CD4-positive, alpha-beta T cell (primary cell): ENCODE measurements at regions of chr9 and their contacts with region 1.

Region 1: DNA sequence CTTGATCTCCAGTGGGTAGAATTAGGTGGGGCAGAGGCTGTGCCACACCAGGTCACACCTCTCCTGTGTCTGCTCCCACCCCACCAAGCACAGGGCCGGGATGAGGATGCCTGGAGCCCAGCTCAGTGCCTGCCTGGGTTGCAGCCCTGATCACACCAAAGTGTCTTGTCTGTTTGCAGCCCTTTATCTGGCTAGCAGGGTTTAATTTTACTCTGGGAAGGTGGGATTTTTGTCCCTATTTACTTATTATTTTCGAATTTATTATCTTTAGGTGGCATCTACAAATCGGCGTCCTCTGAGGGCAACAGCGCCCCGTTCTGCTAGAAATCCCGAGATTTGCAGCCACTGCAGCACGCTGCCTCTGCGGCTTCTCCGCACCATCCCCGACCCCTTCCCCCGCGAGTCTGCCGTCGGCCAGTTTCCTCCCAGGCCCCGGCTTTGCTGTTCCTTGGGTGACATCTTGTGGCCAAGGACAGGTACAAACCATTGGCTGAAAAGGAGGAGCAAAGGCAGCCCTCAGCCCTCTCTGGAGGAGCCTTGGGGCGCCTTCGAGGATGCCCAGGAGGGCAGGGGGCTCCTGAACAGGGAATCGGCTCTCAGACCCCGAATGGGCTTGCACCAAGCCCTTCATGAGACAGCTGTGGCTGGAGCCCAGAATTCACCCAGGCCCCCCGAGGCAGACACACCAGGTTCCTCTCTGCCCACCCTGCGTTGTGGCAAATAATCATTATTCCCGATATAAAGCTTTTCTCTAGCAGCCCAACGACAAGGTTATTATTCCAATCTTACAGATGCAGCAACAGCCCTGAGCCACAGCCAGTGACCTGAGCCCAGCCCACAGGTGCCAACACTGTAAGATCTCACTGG is 113.0 kb downstream of the GAPVD1 start:
- DNase-seq: peak; percentile 38 to 82 (median 56)
- ATAC-seq: peak; percentile 98
- H3K4me3 ChIP-seq: no peak overlapping the region
- H3K4me3 Mint-ChIP-seq: peak overlapping the region; percentile 40
- H3K27ac ChIP-seq: no peak overlapping the region
- H3K27ac Mint-ChIP-seq: no peak overlapping the region
- H3K4me1 ChIP-seq: peaks cover 10% of the 10 kb centered on the region
- H3K4me1 Mint-ChIP-seq: peaks cover 6% of the 10 kb centered on the region
- H3K27me3 ChIP-seq: peaks cover 0 to 5% of the 10 kb centered on the region in 2 experiments
- H3K27me3 Mint-ChIP-seq: peaks cover 21% of the 10 kb centered on the region
- CTCF ChIP-seq: peak; percentile 74

Region 2: GRCh38 chr9:124617471-124618141 is 757.1 kb before region 1 on chr9:
- CTCF ChIA-PET with region 1: no interaction called
- POLR2A ChIA-PET with region 1: no interaction called
- intact Hi-C with region 1: loop called in 1 of 2 experiments (anchors 5 kb)
- DNase-seq: peak; percentile 56 to 82 (median 63)
- ATAC-seq: peak; percentile 71
- H3K4me3 ChIP-seq: no peak overlapping the region
- H3K4me3 Mint-ChIP-seq: no peak overlapping the region
- H3K27ac ChIP-seq: no peak overlapping the region
- H3K27ac Mint-ChIP-seq: no peak overlapping the region
- H3K4me1 ChIP-seq: no peaks in the 10 kb centered on the region
- H3K4me1 Mint-ChIP-seq: no peaks in the 10 kb centered on the region
- H3K27me3 ChIP-seq: peaks cover 0 to 6% of the 10 kb centered on the region in 2 experiments
- H3K27me3 Mint-ChIP-seq: peaks cover 12% of the 10 kb centered on the region
- CTCF ChIP-seq: peak; percentile 74

Region 3: GRCh38 chr9:124771021-124771866 is 603.4 kb before region 1 on chr9 and contains the start of gene NR6A1:
- CTCF ChIA-PET with region 1: no interaction called
- POLR2A ChIA-PET with region 1: no interaction called
- intact Hi-C with region 1: loop called in 1 of 2 experiments (anchors 1 kb)
- DNase-seq: peak; percentile 81 to 97 (median 90)
- ATAC-seq: peak; percentile 88
- H3K4me3 ChIP-seq: peak within 1 kb of the TSS; percentile 59
- H3K4me3 Mint-ChIP-seq: peak within 1 kb of the TSS; percentile 90
- H3K27ac ChIP-seq: no peak within 1 kb of the TSS
- H3K27ac Mint-ChIP-seq: peak within 1 kb of the TSS; percentile 32
- H3K4me1 ChIP-seq: peaks cover 32% of the 10 kb centered on the region
- H3K4me1 Mint-ChIP-seq: peaks cover 39% of the 10 kb centered on the region
- H3K27me3 ChIP-seq: peaks cover 34 to 71% of the 10 kb centered on the region in 2 experiments
- H3K27me3 Mint-ChIP-seq: peaks cover 87% of the 10 kb centered on the region
- CTCF ChIP-seq: no peak
- total RNA-seq, gene NR6A1: not detected

Region 4: GRCh38 chr9:124812401-124813016 is 562.2 kb before region 1 on chr9:
- CTCF ChIA-PET with region 1: no interaction called
- POLR2A ChIA-PET with region 1: no interaction called
- intact Hi-C with region 1: no loop called
- DNase-seq: no peak
- ATAC-seq: no peak
- H3K4me3 ChIP-seq: no peak overlapping the region
- H3K4me3 Mint-ChIP-seq: no peak overlapping the region
- H3K27ac ChIP-seq: no peak overlapping the region
- H3K27ac Mint-ChIP-seq: no peak overlapping the region
- H3K4me1 ChIP-seq: no peaks in the 10 kb centered on the region
- H3K4me1 Mint-ChIP-seq: no peaks in the 10 kb centered on the region
- H3K27me3 ChIP-seq: no peaks in the 10 kb centered on the region
- H3K27me3 Mint-ChIP-seq: peaks cover 5% of the 10 kb centered on the region
- CTCF ChIP-seq: no peak

Region 5: DNA sequence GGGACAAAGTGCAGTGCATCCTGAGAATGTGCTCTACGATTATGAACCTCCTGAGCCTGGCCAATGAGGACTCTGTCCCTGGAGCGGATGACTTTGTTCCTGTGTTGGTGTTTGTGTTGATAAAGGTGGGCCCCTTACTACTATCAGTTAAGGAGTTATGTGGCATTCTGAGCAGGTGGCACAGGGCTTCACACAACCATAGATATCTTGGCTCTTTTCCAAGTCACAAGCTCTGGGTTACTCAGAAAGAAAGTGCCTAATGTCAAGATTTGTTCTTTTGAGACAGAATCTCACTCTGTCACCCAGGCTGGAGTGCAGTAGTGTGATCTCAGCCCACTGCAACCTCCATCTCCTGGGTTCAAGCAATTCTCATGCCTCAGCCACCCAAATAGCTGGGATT is 14.1 kb before region 1 on chr9:
- CTCF ChIA-PET with region 1: no interaction called
- POLR2A ChIA-PET with region 1: no interaction called
- intact Hi-C with region 1: no loop called
- DNase-seq: no peak
- ATAC-seq: no peak
- H3K4me3 ChIP-seq: no peak overlapping the region
- H3K4me3 Mint-ChIP-seq: no peak overlapping the region
- H3K27ac ChIP-seq: no peak overlapping the region
- H3K27ac Mint-ChIP-seq: peak overlapping the region; percentile 51
- H3K4me1 ChIP-seq: no peaks in the 10 kb centered on the region
- H3K4me1 Mint-ChIP-seq: peaks cover 10% of the 10 kb centered on the region
- H3K27me3 ChIP-seq: no peaks in the 10 kb centered on the region
- H3K27me3 Mint-ChIP-seq: no peaks in the 10 kb centered on the region
- CTCF ChIP-seq: no peak